Endothelial cell of umbilical vein (primary cell): ENCODE measurements at regions of chr6 and their contacts with region 1.

Region 1: GRCh38 chr6:118709859-118710350 is 58.5 kb upstream of the CEP85L start:
- DNase-seq: no peak
- H3K4me3 ChIP-seq: peak overlapping the region in 2 of 3 experiments; percentile 7 to 31
- H3K27ac ChIP-seq: peak overlapping the region; percentile 93
- H3K4me1 ChIP-seq: peaks cover 27% of the 10 kb centered on the region
- H3K27me3 ChIP-seq: no peaks in the 10 kb centered on the region
- CTCF ChIP-seq: no peak
- POLR2A ChIP-seq: no peak

Region 2: GRCh38 chr6:117498159-117498558 is 1211.7 kb before region 1 on chr6:
- CTCF ChIA-PET with region 1: no interaction called
- POLR2A ChIA-PET with region 1: no interaction called
- dilution Hi-C with region 1: no loop called
- intact Hi-C with region 1: loop called (anchors 10 kb)
- DNase-seq: peak; percentile 88
- H3K4me3 ChIP-seq: no peak overlapping the region
- H3K27ac ChIP-seq: peak overlapping the region; percentile 99
- H3K4me1 ChIP-seq: peaks cover 74% of the 10 kb centered on the region
- H3K27me3 ChIP-seq: no peaks in the 10 kb centered on the region
- CTCF ChIP-seq: no peak
- POLR2A ChIP-seq: peak; percentile 51

Region 3: GRCh38 chr6:118387764-118388701 is 321.9 kb before region 1 on chr6:
- CTCF ChIA-PET with region 1: no interaction called
- POLR2A ChIA-PET with region 1: no interaction called
- dilution Hi-C with region 1: no loop called
- intact Hi-C with region 1: loop called (anchors 5 kb)
- DNase-seq: peak; percentile 97
- H3K4me3 ChIP-seq: no peak overlapping the region
- H3K27ac ChIP-seq: peak overlapping the region; percentile 81
- H3K4me1 ChIP-seq: peaks cover 24% of the 10 kb centered on the region
- H3K27me3 ChIP-seq: no peaks in the 10 kb centered on the region
- CTCF ChIP-seq: no peak
- POLR2A ChIP-seq: peak; percentile 50

Region 4: DNA sequence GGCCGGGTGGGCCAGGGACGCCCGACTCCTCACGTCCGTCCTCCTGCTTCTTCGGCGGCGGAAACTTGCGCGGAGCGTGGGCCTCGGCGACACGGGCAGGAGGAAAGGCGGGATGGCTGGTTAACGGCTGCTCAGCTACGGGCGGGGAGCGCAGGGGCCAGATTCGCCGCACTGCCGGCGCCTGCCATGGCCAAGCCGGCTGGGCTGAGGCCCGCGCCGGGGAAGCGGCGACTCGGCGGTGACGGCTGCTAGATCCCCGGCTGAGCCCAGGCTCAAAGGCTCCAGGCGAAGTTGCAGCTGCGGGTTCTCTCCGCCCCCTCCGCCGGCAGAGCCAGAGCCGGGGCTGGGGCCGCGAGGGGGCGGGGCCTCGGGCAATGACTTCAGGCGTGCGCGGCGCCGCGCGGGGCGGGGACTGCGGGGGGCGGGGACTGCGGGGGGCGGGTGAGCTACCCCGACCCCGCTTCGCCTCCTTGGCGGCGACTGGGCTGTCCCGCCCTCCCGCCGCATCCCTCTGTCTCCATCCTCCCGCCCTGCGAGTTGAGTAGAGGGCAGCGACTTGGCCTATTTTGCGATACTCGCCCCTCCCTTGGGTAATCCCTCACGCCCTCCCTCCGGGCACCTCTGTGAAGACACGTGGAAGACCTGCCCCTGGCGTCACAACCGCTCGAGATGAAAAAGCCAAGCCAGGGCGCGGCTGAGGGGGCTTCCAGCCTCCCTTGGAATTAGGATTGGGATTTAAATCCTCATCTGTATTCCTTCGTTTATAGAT is 58.4 kb before region 1 on chr6 and contains the start of gene CEP85L:
- CTCF ChIA-PET with region 1: interaction called, 9 read pairs
- POLR2A ChIA-PET with region 1: interaction called, 11 read pairs
- dilution Hi-C with region 1: no loop called
- intact Hi-C with region 1: loop called (anchors 1 kb)
- DNase-seq: peak; percentile 90
- H3K4me3 ChIP-seq: peak within 1 kb of the TSS; percentile 57 to 98 (median 93)
- H3K27ac ChIP-seq: peak within 1 kb of the TSS; percentile 95
- H3K4me1 ChIP-seq: peaks cover 21% of the 10 kb centered on the region
- H3K27me3 ChIP-seq: no peaks in the 10 kb centered on the region
- CTCF ChIP-seq: no peak
- POLR2A ChIP-seq: peak; percentile 84
- total RNA-seq, gene CEP85L: 9.2 and 12.0 TPM in 2 replicates

Region 5: GRCh38 chr6:118683881-118684872 is 25.7 kb before region 1 on chr6:
- CTCF ChIA-PET with region 1: interaction called, 3 read pairs
- POLR2A ChIA-PET with region 1: no interaction called
- dilution Hi-C with region 1: no loop called
- intact Hi-C with region 1: loop called (anchors 1 kb)
- DNase-seq: peak; percentile 77
- H3K4me3 ChIP-seq: no peak overlapping the region
- H3K27ac ChIP-seq: no peak overlapping the region
- H3K4me1 ChIP-seq: no peaks in the 10 kb centered on the region
- H3K27me3 ChIP-seq: no peaks in the 10 kb centered on the region
- CTCF ChIP-seq: no peak
- POLR2A ChIP-seq: no peak

Region 6: DNA sequence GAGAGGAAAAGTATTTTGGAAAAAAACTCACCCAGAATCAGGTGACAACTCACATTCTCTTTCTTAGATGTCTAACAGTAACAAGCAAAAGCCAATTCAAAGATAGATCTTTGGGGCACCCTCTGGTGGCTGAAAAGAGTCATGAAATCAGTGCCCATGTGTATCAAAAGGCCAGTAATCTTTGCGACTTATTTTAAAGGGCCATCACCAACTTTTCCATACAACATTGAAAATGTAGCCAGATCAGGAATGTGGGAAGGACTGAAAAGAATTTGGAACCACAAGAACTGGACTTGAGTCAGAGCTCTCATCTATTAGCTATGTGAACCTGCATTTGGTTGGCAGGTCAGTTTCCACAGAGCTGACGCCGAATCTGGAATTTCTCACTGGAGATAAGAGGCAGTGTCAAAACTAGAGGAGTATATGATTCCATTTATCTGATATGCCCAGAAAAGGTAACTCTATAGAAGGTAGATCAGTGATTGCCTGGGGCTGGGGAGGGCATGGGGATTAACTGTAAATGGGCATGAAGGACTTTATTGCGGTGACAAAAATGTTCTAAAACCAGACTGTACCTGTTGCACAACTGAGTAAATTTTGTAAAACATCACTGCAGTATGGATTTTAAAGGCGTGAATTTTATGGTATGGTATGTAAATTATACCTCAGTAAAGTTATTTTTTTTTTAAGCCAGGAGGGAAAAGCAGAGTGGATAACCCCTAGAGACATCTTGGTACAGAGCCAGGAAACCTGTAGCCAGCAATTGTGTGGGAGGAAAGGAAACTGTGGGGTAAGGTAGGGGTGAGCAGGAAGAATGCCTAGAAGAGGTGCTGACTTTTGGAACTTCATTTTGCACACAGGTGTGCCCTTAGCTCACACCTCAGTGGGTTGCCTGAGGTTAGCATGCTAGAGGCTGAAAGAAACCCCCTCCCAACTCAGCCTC is 67.0 kb after region 1 on chr6:
- CTCF ChIA-PET with region 1: interaction called, 3 read pairs
- POLR2A ChIA-PET with region 1: no interaction called
- dilution Hi-C with region 1: no loop called
- intact Hi-C with region 1: loop called (anchors 2 kb)
- DNase-seq: peak; percentile 84
- H3K4me3 ChIP-seq: no peak overlapping the region
- H3K27ac ChIP-seq: no peak overlapping the region
- H3K4me1 ChIP-seq: no peaks in the 10 kb centered on the region
- H3K27me3 ChIP-seq: peaks cover 7% of the 10 kb centered on the region in 2 experiments
- CTCF ChIP-seq: peak; percentile 58 to 59
- POLR2A ChIP-seq: no peak